Activated naive CD4-positive, alpha-beta T cell treated with anti-CD3 and anti-CD28 coated beads for 36 hours (primary cell): ENCODE measurements at regions of chr3 and their contacts with region 1.

Region 1: DNA sequence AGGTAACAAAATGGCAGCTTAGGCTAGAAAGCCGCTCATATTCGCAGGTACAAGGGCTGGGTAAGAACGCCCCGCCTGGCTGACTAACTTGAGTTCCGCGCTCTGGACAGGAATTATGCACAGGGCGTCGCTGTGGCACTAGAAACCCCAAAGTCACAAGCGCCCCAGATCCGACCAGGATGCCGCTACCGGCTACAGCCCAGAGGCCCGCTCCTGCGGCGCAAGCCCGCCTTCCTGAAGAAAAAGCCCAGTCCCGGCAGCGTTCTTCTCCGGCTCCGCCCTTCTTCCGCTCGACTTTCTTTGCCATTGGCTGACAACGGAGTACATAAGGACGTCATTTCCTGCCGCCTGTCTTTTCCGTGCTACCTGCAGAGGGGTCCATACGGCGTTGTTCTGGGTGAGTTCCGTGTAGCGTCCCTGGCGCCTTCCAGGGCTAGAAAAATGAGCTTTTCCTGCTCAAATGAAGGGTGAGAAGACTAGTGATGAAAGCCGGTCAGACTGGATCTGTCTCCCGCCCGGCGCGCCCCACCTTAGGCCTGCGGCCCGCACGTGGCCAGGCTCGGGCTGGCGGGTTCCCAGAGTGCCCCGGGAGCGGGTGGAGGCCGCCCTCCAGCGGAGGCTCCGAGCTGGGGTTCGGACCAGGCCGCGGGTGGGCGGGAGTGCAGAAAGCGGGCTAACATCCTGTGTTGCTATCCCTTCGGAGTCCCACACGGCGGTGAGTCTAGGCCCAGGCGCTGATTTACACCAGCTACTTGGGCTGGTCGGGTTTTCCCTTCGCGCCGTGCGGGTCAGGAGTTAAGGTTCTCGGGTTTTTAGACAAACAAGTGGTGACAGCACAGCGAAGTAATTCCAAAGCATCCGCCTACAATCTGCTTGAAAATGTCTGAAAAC is at the start of gene RPSA:
- DNase-seq: peak; percentile 98
- H3K4me3 Mint-ChIP-seq: peak within 1 kb of the TSS; percentile 94
- H3K27ac Mint-ChIP-seq: peak within 1 kb of the TSS; percentile 96
- H3K4me1 Mint-ChIP-seq: peaks cover 41% of the 10 kb centered on the region
- H3K27me3 Mint-ChIP-seq: no peaks in the 10 kb centered on the region
- total RNA-seq, gene RPSA: 3,309 to 3,414 TPM

Region 2: GRCh38 chr3:39166932-39167532 is 239.6 kb before region 1 on chr3:
- CTCF ChIA-PET with region 1: no interaction called
- intact Hi-C with region 1: no loop called
- DNase-seq: no peak
- H3K4me3 Mint-ChIP-seq: no peak overlapping the region
- H3K27ac Mint-ChIP-seq: peak overlapping the region; percentile 11
- H3K4me1 Mint-ChIP-seq: peaks cover 18% of the 10 kb centered on the region
- H3K27me3 Mint-ChIP-seq: no peaks in the 10 kb centered on the region

Region 3: DNA sequence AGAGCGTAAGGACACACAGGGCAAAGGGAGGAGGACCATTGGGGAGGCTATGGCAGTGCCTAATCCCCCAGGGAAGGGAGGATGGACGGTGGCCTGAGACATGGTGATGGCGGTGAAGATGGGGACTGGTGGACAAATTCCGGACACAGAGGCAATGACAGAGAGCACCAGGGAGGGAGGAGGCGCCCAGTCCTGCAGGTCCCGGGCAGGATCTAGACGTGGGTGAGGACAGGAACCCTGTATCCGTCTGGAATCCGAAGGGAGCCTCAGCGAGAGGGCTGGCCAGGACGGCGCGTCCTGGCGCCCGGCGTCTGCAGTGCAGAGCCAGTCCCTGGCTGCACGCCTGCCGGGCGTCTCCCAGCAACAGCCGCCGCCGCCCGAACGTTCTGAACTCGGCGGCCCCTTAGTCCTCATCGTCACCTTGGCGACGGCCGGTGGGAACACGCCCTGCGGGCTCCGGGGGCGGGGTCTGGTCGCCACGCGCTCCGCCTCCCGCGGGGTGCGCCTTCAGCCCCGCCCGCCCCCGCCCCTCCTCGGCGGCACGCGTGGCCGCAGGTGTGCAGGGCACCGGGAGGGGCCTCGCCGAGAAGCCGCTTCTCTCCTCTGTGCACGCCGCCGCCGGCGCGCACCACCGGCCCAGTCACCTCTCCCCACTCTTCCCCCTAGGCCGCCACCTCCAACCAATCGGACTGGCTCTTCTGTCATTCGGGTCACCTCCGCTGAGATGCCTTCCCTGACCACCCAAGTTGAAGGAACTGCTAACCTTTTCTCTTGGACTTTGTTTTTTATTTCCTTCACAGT is 225.9 kb before region 1 on chr3:
- CTCF ChIA-PET with region 1: no interaction called
- intact Hi-C with region 1: loop called (anchors 1 kb)
- DNase-seq: peak; percentile 89
- H3K4me3 Mint-ChIP-seq: peak overlapping the region; percentile 85
- H3K27ac Mint-ChIP-seq: peak overlapping the region; percentile 92
- H3K4me1 Mint-ChIP-seq: peaks cover 46% of the 10 kb centered on the region
- H3K27me3 Mint-ChIP-seq: no peaks in the 10 kb centered on the region

Region 4: GRCh38 chr3:39383045-39383880 is 23.4 kb before region 1 on chr3 and contains the start of gene SLC25A38:
- CTCF ChIA-PET with region 1: interaction called, 5 read pairs
- intact Hi-C with region 1: loop called (anchors 1 kb)
- DNase-seq: peak; percentile 84
- H3K4me3 Mint-ChIP-seq: peak within 1 kb of the TSS; percentile 89
- H3K27ac Mint-ChIP-seq: peak within 1 kb of the TSS; percentile 97
- H3K4me1 Mint-ChIP-seq: peaks cover 39% of the 10 kb centered on the region
- H3K27me3 Mint-ChIP-seq: no peaks in the 10 kb centered on the region
- total RNA-seq, gene SLC25A38: 20.9 to 21.0 TPM

Region 5: DNA sequence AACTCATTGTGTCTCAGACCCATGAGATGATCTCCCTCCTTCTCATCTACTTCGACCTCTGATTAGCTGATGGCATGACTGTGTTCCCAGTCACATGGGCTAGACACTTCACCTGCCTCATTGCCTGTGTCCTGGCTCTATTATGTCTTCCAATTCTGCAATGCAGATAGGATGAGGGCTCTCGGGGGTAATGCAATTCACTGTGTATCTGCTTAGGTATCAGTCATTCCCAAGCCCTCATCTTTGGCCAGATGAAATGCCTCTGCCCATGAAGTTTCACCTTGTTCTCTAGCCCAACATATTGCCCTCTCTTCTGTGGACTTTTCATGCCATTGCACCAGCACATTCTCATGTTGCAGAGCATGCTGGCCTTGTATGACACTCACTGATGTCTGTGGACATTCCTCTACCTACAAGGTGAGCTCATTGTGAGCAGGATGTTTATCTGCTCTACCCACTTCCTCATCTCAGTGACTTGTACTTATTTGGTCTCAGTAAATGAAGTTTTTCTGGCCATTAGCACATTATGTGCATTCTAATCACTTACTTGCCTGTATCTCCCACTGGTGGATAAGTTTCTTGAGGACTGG is 93.1 kb after region 1 on chr3:
- CTCF ChIA-PET with region 1: no interaction called
- intact Hi-C with region 1: loop called (anchors 1 kb)
- DNase-seq: no peak
- H3K4me3 Mint-ChIP-seq: no peak overlapping the region
- H3K27ac Mint-ChIP-seq: no peak overlapping the region
- H3K4me1 Mint-ChIP-seq: peaks cover 4% of the 10 kb centered on the region
- H3K27me3 Mint-ChIP-seq: peaks cover 35% of the 10 kb centered on the region

Region 6: GRCh38 chr3:40191850-40192448 is 785.3 kb after region 1 on chr3:
- CTCF ChIA-PET with region 1: no interaction called
- intact Hi-C with region 1: loop called (anchors 5 kb)
- DNase-seq: peak; percentile 73
- H3K4me3 Mint-ChIP-seq: no peak overlapping the region
- H3K27ac Mint-ChIP-seq: no peak overlapping the region
- H3K4me1 Mint-ChIP-seq: no peaks in the 10 kb centered on the region
- H3K27me3 Mint-ChIP-seq: no peaks in the 10 kb centered on the region

Region 7: DNA sequence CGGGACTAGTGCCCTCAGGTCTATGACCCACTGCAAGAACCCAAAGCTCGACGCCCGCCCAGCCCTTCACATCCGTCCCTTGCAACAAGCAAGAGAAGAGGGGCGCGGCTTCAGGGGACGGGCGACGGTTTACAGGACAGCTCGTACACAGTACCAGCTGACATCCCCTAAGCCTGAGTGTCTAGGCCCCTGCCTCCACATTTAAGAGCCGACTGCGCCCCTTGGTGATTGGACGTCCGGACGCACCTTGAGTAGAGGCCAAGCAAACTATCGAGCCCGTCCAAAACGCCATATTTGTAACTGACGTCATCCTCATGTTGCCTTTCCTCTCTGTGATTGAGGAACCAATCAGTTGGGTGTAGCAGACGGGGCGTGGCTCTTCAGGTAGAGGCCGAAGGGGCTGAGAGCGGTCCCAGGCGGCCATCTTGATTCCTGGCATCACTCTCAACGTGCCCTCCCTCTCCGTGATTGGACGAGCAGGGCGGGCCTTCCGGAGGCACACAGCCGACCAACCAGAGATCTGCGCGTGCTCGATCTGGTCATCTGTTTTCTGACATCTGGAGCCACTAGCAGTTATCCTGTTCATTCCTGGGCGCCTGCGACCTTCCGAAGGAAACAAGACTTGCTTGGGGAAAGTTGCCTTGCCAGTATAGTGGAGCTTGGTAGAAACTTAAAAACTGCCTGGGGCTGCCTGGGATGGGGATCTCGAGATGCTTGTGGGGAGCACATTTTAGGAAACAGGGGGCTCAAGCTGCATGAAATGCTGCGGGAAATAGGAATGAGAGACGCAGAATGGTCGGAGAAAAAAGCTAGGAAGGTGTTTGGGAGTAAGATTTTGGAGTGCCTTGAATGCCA is 1046.5 kb after region 1 on chr3:
- CTCF ChIA-PET with region 1: no interaction called
- intact Hi-C with region 1: loop called (anchors 1 kb)
- DNase-seq: peak; percentile 98
- H3K4me3 Mint-ChIP-seq: peak overlapping the region; percentile 93
- H3K27ac Mint-ChIP-seq: peak overlapping the region; percentile 92
- H3K4me1 Mint-ChIP-seq: peaks cover 26% of the 10 kb centered on the region
- H3K27me3 Mint-ChIP-seq: no peaks in the 10 kb centered on the region